AG04450 (cell line): ENCODE measurements at regions of chr10 and their contacts with region 1.

Region 1: GRCh38 chr10:79475119-79475653 is 29.8 kb upstream of the ZCCHC24 start:
- DNase-seq: no peak
- H3K4me3 ChIP-seq: no peak overlapping the region
- H3K27ac ChIP-seq: no peak overlapping the region
- H3K27me3 ChIP-seq: no peaks in the 10 kb centered on the region
- CTCF ChIP-seq: no peak

Region 2: GRCh38 chr10:79487296-79488194 is 12.4 kb after region 1 on chr10:
- CTCF ChIA-PET with region 1: interaction called, 16 read pairs
- POLR2A ChIA-PET with region 1: interaction called, 4 read pairs
- DNase-seq: no peak
- H3K4me3 ChIP-seq: no peak overlapping the region
- H3K27ac ChIP-seq: peak overlapping the region; percentile 88
- H3K27me3 ChIP-seq: no peaks in the 10 kb centered on the region
- CTCF ChIP-seq: peak; percentile 63